AG04449 (cell line): ENCODE measurements at regions of chr3 and their contacts with region 1.

Region 1: DNA sequence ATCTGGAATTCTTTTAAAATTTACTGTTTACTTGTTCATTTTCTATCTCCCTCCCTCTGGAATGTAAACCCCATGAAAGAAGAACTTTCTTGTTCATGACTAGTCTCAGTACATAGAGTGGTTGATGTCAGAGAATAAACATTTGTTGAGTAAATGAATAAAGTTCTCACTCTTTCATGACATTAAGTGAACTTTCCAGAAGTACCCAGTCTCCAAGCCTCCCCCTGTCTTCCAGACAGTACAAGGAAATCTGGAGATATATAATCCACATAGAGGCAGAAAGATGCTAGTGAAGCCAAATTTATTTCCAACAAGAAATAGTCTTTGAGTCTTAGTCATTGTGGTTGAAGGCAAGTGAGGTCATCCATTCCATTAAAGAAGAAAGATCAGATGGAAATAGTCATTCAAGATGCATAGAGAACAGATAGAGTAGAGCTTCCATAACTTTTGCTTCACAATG is 71.5 kb upstream of the GALNT15 start:
- DNase-seq: peak; percentile 88
- H3K4me3 ChIP-seq: no peak overlapping the region; the same call in 1 of the 2 replicates
- CTCF ChIP-seq: no peak

Region 2: DNA sequence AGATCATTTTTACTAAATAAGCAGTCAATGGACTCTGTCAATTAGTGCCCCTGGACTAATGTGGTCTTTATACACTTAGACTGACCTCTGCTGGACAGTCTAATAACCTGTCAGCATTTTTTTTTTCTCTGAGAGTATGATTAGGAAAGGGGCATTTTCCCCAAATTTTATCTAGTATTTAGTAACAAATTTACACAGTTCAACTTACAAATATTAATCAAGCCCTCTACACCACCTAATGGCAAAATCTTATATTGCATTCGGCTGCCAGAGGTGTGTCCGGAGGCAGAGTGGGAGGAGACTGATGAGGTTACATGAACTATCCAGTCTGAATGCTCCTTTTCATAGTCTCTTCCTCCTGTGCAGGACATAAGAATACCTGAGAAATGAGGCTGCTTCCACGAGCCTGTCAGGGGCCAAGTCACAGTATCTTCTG is 545.4 kb before region 1 on chr3:
- CTCF ChIA-PET with region 1: no interaction called
- POLR2A ChIA-PET with region 1: no interaction called
- DNase-seq: peak; percentile 41
- H3K4me3 ChIP-seq: no peak overlapping the region
- CTCF ChIP-seq: peak; percentile 39

Region 3: DNA sequence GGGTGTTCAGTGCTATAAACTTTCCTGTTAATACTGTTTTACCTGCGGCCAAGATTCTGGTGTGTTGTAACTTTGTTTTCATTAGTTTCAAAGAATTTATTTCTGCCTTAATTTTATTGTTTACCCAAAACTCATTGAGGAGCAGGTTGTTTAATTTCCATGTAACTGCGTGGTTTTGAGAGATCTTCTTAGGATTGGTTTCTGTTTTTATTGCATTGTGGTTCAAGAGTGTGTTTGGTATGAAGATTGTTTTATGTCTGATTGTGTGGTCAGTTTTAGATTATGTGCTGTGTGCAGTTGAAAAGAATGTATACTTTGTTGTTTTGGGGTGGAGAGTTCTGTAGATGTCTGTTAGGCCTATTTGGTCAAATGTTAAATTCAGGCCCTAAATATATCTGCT is 61.9 kb before region 1 on chr3:
- CTCF ChIA-PET with region 1: no interaction called
- POLR2A ChIA-PET with region 1: no interaction called
- DNase-seq: no peak
- H3K4me3 ChIP-seq: no peak overlapping the region
- CTCF ChIP-seq: no peak

Region 4: DNA sequence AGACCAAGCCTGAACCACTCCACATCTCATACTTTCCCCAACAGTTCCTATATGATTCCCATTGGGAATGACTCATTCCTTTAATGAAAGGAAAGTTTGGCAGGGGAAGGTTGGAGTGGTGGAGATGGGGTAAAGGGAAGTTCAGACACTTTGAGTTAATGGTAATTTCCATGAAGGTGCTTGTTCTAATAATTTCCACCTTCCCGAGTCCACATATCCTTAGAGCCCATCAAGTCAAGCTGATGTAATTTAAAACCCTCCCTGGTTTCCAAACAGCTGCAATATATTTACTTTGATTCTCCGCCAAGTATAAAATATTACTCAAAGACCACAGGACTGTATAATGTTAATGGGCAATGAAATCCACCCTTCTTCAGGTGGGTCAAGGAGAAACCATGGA is 23.4 kb before region 1 on chr3:
- CTCF ChIA-PET with region 1: no interaction called
- POLR2A ChIA-PET with region 1: interaction called, 11 read pairs
- DNase-seq: no peak
- H3K4me3 ChIP-seq: no peak overlapping the region
- CTCF ChIP-seq: no peak

Region 5: GRCh38 chr3:16090024-16090423 is 12.9 kb before region 1 on chr3:
- CTCF ChIA-PET with region 1: interaction called, 11 read pairs
- POLR2A ChIA-PET with region 1: interaction called, 19 read pairs
- DNase-seq: peak; percentile 99
- H3K4me3 ChIP-seq: no peak overlapping the region
- CTCF ChIP-seq: no peak